Cardiac septum (tissue), 1 donor: ENCODE measurements at regions of chr22 and their contacts with region 1.

Region 1: GRCh38 chr22:30005213-30005857 is 74.9 kb upstream of the HORMAD2 start:
- DNase-seq: no peak

Region 2: DNA sequence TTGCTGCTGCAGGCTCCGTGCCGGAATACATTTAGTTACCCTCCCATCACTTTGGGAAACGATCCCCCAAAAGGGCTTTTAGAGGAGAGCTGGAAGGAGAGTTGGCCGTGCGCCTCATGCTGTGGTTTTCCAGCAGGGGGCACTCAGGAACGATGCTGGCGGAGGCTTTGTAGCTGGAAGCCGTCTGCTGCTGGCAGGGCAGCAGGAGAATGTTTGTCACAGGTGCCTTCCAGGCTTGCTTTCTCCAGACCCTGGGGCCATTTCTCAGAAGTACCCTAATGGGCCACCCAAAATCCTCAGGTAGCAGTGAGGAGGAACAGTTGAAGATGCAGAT is 315.5 kb before region 1 on chr22:
- intact Hi-C with region 1: loop called (anchors 10 kb)
- DNase-seq: no peak

Region 3: DNA sequence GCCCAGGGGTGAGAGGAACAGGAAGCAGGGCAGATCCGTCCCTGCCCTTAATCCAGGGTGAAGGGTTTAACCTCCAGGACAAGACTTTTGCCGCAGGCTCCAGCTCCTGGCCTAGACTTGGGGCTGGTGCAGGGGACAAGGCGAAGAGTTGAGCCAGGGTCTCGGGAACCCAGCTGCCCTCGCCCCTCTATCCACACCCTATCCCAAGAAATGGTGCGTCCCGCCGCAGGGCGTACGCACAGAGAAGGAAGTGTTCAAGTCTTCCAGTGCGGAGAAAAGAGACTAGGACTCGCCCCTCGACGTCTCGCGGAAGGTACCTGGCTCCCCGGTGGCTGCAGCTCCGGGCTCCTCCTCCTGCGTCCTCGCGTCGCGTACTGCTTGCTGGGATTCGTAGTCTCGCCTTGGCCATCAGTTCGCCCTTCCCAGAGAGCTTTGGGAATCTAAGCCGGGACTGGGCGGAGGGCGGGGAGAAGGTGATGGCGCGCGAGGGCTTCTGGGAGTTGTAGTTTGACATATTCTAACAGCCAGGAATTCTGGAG is 238.6 kb before region 1 on chr22 and contains the start of gene ZMAT5:
- intact Hi-C with region 1: loop called (anchors 5 kb)
- DNase-seq: peak; percentile 98
- total RNA-seq, gene ZMAT5: 17.1 TPM

Region 4: DNA sequence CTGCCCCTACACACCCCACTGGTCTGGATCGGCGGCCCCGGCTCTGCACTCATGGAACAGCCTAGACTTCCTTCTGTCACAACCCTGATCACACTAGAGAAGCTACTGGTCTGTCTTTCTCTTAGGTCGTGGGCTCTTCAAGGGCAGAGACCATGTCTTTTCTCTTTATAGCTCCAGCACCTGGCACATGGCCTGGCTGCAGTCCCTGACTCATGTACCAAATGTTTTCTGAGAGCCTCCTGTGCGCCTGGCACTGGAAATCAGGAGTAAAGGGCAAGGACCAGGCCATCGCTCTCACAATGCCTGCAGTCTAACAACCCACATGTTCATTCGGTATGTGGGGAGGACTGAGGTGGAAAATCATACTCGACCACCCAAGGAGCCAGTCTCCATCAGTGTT is 174.8 kb before region 1 on chr22:
- intact Hi-C with region 1: loop called (anchors 5 kb)
- DNase-seq: peak; percentile 81

Region 5: DNA sequence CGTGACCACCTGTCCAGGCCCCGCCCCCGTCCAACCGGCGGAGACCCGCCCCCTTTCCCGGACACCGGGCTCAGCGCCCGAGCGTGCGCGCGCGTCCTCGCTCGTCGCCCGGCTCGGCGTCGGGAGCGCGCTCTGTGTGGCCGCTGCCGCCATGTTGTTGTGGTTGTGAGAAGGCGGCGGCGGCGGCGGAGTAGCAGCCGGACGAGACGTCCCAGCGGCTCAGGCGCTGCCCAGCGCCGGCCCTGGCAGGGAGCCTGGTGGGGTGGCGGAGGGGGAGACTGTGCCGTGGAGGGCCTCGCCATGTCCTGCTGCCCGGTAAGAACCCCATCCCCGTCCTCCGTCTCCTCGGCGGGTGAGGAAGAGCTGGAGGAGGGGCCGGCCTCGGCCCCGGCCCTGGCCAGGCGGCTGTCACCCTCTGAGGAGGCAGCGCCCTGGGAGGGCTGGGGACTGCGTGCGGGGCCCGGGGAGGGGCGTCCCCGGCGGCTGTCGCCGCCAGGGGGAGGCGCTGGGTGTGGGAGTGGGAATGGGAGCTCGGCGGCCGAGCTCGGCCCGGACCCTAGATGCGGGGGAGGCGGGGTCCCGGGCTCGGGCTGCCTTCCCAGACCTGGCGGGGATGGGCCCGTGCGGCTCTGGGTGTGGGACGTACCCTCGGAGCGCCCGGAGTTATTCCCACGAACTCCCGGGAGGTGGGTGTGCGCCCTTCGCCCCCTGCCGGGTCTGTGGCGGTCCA is 122.1 kb before region 1 on chr22 and contains the start of gene MTMR3:
- intact Hi-C with region 1: loop called (anchors 10 kb)
- DNase-seq: peak; percentile 98
- total RNA-seq, gene MTMR3: 45.9 TPM

Region 6: GRCh38 chr22:29947410-29948384 is 57.6 kb before region 1 on chr22:
- intact Hi-C with region 1: no loop called
- DNase-seq: no peak

Region 7: DNA sequence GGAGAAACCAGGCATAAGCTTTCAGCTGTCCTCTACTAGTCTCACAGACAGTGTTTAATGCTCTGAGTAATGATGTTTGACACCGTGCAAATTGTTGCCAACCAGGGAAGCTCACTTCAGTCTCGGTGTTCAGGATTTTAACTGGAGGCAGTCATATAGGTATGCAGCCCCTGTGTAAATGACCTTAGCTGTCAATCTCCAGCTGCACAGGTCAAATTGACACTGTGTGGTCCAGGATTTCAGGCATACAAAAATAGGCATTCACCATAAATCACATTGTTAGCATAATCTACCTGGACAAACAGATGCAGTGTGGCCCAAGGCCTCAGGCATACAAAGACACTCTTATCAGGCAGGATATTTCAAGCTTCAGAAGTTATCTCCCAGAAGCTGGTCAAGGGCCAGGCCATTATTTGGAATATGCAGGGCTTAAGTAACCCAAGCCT is 49.3 kb after region 1 on chr22:
- intact Hi-C with region 1: no loop called
- DNase-seq: no peak